PC-9 (cell line): ENCODE measurements at regions of chr7 and their contacts with region 1.

Region 1: DNA sequence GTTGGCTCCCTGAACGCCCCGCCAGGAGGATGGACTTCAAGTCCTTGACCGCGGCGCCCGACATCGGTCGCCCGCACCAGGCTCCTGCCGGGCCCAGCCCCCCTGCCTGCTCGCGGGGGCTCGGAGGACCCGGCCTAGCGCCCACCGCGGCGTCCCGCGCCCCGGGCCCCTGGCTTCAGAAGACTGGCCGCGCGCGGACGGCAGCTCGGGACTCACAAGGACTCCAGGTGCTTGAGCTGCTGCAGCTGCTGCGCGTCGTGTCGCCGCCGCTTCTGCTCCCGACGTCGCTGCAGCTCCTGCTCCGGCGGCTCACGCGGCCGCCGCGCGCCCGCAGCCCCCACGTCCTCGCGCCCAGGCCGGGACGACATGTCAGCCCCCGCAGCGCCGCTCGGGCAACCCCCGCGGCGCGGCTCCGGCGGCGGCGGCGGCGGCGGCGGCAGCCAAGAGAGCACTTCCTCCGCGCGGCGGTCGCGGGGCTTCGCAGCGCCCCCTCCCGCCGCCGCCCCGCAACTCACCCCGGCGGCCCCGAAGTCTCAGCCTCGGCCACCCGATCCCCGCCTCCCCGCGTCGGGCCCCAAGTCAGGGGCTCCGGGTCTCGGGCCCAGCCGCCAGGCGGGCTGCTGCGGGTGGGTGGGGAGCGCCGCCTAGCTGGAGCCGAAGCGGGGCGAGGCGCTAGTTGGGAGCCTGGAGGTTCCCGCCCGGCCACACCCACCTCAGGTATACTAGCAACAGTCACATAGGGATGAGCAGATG is at the start of gene RP9:
- DNase-seq: peak in 1 of 2 experiments; percentile 80
- H3K4me3 ChIP-seq: peak within 1 kb of the TSS; percentile 69
- H3K27ac ChIP-seq: peak within 1 kb of the TSS; percentile 4
- H3K4me1 ChIP-seq: peaks cover 24% of the 10 kb centered on the region
- H3K27me3 ChIP-seq: 0 out of 2 replicates have a peak, but pooled peaks cover 10% of the 10 kb centered on the region
- CTCF ChIP-seq: peak; percentile 62; the same call in 1 of the 2 replicates
- total RNA-seq, gene RP9: 15.4 and 22.1 TPM in 2 replicates

Region 2: DNA sequence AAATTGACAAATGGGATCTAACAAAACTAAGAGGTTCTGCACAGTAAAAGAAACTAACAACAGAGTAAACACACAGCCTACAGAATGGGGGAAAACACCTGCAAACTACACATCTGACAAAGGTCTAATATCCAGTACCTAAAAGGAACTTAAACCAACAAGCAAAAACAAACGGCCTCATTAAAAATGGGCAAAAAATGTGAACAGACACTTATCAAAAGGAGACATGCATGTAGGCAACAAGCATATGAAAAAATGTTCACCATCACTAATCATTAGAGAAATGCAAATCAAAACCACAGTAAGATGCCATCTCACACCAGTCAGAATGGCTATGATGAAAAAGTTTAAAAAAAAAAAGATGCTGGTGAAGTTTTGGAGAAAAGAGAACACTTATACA is 415.0 kb before region 1 on chr7:
- CTCF ChIA-PET with region 1: no interaction called
- POLR2A ChIA-PET with region 1: no interaction called
- intact Hi-C with region 1: loop called (anchors 5 kb)
- DNase-seq: no peak
- H3K4me3 ChIP-seq: no peak overlapping the region
- H3K27ac ChIP-seq: no peak overlapping the region
- H3K4me1 ChIP-seq: peaks cover 4% of the 10 kb centered on the region; the same call in 1 of the 2 replicates
- H3K27me3 ChIP-seq: no peaks in the 10 kb centered on the region
- CTCF ChIP-seq: no peak

Region 3: GRCh38 chr7:32803406-32804141 is 305.6 kb before region 1 on chr7:
- CTCF ChIA-PET with region 1: interaction called, 3 read pairs
- POLR2A ChIA-PET with region 1: no interaction called
- intact Hi-C with region 1: loop called (anchors 1 kb)
- DNase-seq: no peak
- H3K4me3 ChIP-seq: no peak overlapping the region
- H3K27ac ChIP-seq: no peak overlapping the region
- H3K4me1 ChIP-seq: no peaks in the 10 kb centered on the region
- H3K27me3 ChIP-seq: no peaks in the 10 kb centered on the region
- CTCF ChIP-seq: no peak

Region 4: DNA sequence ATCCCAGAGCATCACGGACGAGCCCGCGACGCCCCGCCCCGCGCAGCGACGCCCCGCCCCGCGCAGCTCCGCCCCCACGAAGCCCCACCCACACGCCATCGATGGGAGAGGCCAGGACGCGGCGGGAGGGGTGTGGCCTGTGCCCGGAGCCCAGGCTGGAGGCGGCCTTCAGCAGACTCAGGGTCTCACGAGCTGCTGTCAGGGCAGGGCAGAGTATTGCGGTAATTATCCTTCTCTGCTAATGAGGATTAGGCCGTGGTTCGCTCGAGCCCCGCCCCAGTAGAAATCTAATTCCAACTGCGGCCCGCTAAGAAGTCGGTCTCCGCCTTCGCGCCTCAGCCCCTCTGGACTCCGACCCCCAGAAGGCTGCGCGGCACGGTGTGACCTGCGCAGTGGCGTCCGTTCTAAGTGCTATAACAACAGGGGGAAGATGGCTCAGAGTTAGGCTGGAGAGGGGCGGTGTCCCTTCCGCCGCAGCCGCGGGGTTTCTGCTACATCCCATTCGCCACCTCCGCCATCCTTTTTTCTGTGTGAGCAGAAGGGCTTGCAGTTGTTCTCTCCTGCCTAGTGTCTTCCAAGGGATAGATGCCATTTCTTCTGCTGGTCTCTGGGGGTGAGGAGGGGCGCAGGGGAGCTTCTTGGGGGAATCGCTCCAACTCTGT is 46.3 kb before region 1 on chr7:
- CTCF ChIA-PET with region 1: interaction called, 4 read pairs
- POLR2A ChIA-PET with region 1: no interaction called
- intact Hi-C with region 1: loop called (anchors 5 kb)
- DNase-seq: peak; percentile 91 to 95
- H3K4me3 ChIP-seq: peak overlapping the region; percentile 80
- H3K27ac ChIP-seq: no peak overlapping the region
- H3K4me1 ChIP-seq: peaks cover 21% of the 10 kb centered on the region
- H3K27me3 ChIP-seq: no peaks in the 10 kb centered on the region
- CTCF ChIP-seq: no peak